ENCODE measurements at regions of chr10 and their contacts with region 1.

Region 1: DNA sequence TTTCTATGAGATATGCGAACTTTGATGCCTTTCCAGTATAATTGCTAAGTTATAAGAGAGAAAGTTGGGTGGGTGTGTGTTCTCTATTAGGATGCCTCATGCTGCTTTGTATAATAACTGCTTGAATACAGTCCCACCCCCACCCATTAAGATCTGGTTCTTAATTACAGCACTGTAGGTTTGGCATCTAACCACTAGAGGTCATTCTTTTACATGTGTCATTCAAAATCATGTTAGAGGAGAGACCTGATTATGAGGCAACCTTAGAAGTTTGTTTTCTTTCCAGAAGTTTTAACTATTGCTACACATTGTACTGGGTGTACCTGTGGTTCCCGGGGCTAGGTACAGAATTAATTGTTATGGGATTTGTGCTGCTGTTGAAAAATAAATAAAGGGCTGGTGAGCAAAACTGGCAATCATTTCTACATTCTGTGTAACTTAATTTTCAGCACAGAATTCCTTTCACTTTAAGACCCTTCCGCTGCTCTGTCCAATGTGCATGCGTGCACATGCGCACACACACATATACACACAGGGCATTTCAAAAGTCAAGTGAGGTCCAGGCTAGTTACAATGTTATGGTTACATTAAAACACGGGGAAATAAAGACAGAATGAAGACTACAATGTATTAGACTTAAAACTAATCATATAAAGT is 1156.3 kb downstream of the SORCS3 start:
- DNase-seq: peak in 1 of 2 experiments; percentile 28
- H3K4me3 ChIP-seq: no peak overlapping the region
- H3K4me3 Mint-ChIP-seq: no peak overlapping the region
- H3K27ac Mint-ChIP-seq: no peak overlapping the region
- H3K4me1 ChIP-seq: no peaks in the 10 kb centered on the region
- H3K4me1 Mint-ChIP-seq: no peaks in the 10 kb centered on the region
- H3K27me3 ChIP-seq: no peaks in the 10 kb centered on the region
- H3K27me3 Mint-ChIP-seq: no peaks in the 10 kb centered on the region
- CTCF ChIP-seq: peak; percentile 51

Region 2: DNA sequence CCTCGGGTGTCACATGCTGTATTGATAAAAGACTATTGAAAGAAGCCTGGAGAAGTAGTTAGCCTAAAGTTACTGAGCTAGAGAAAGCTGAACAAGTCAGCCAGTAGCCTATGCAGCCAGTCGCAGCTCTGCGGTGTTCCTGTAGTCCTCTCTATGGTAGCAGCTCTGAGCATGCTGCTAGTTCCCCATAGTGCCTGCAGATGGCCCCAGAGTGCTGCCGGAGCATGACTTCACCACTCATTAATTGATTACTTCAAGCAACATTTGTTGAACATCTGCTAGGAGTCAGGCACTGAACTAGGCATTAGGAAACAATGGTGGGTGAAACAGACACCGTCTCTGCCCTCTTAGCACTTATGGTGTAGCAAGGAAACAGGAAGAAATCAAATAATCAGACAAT is 733.6 kb before region 1 on chr10:
- CTCF ChIA-PET with region 1: no interaction called
- POLR2A ChIA-PET with region 1: no interaction called
- intact Hi-C with region 1: loop called (anchors 10 kb)
- DNase-seq: peak; percentile 44 to 55
- H3K4me3 ChIP-seq: no peak overlapping the region
- H3K4me3 Mint-ChIP-seq: no peak overlapping the region
- H3K27ac Mint-ChIP-seq: no peak overlapping the region
- H3K4me1 ChIP-seq: no peaks in the 10 kb centered on the region
- H3K4me1 Mint-ChIP-seq: no peaks in the 10 kb centered on the region
- H3K27me3 ChIP-seq: no peaks in the 10 kb centered on the region
- H3K27me3 Mint-ChIP-seq: peaks cover 7% of the 10 kb centered on the region
- CTCF ChIP-seq: peak; percentile 64 to 75

Region 3: GRCh38 chr10:105855791-105856190 is 58.4 kb after region 1 on chr10:
- CTCF ChIA-PET with region 1: no interaction called
- POLR2A ChIA-PET with region 1: no interaction called
- intact Hi-C with region 1: no loop called
- DNase-seq: no peak
- H3K4me3 ChIP-seq: no peak overlapping the region
- H3K4me3 Mint-ChIP-seq: no peak overlapping the region
- H3K27ac Mint-ChIP-seq: no peak overlapping the region
- H3K4me1 ChIP-seq: no peaks in the 10 kb centered on the region
- H3K4me1 Mint-ChIP-seq: peaks cover 7% of the 10 kb centered on the region
- H3K27me3 ChIP-seq: no peaks in the 10 kb centered on the region
- H3K27me3 Mint-ChIP-seq: no peaks in the 10 kb centered on the region
- CTCF ChIP-seq: no peak

Region 4: GRCh38 chr10:106175760-106176377 is 378.5 kb after region 1 on chr10:
- CTCF ChIA-PET with region 1: no interaction called
- POLR2A ChIA-PET with region 1: no interaction called
- intact Hi-C with region 1: loop called (anchors 5 kb)
- DNase-seq: peak in 1 of 2 experiments; percentile 2
- H3K4me3 ChIP-seq: no peak overlapping the region
- H3K4me3 Mint-ChIP-seq: no peak overlapping the region
- H3K27ac Mint-ChIP-seq: no peak overlapping the region
- H3K4me1 ChIP-seq: no peaks in the 10 kb centered on the region
- H3K4me1 Mint-ChIP-seq: no peaks in the 10 kb centered on the region
- H3K27me3 ChIP-seq: no peaks in the 10 kb centered on the region
- H3K27me3 Mint-ChIP-seq: peaks cover 2% of the 10 kb centered on the region
- CTCF ChIP-seq: peak in 1 of 2 experiments; percentile 38

Region 5: GRCh38 chr10:106189292-106189691 is 391.9 kb after region 1 on chr10:
- CTCF ChIA-PET with region 1: no interaction called
- POLR2A ChIA-PET with region 1: no interaction called
- intact Hi-C with region 1: loop called (anchors 1 kb)
- DNase-seq: peak; percentile 41 to 44
- H3K4me3 ChIP-seq: no peak overlapping the region
- H3K4me3 Mint-ChIP-seq: no peak overlapping the region
- H3K27ac Mint-ChIP-seq: no peak overlapping the region
- H3K4me1 ChIP-seq: no peaks in the 10 kb centered on the region
- H3K4me1 Mint-ChIP-seq: no peaks in the 10 kb centered on the region
- H3K27me3 ChIP-seq: no peaks in the 10 kb centered on the region
- H3K27me3 Mint-ChIP-seq: peaks cover 8% of the 10 kb centered on the region
- CTCF ChIP-seq: peak; percentile 50 to 54